HepG2 (cell line): ENCODE measurements at regions of chr19 and their contacts with region 1.

Region 1: GRCh38 chr19:36528194-36528920 is at the start of gene ZNF260:
- DNase-seq: peak; percentile 95
- ATAC-seq: peak; percentile 96
- H3K4me3 ChIP-seq: peak within 1 kb of the TSS; percentile 73 to 93 (median 85)
- H3K27ac ChIP-seq: peak within 1 kb of the TSS; percentile 86
- H3K4me1 ChIP-seq: peaks cover 18% of the 10 kb centered on the region
- H3K27me3 ChIP-seq: no peaks in the 10 kb centered on the region; a peak in 1 of 5 replicates
- CTCF ChIP-seq: 0 out of 2 replicates have a peak, but pooled peaks have one; percentile 3
- EP300 ChIP-seq: no peak
- POLR2A ChIP-seq: peak; percentile 77 to 90
- RAD21 ChIP-seq: peak; percentile 25; the same call in 1 of the 2 replicates
- total RNA-seq, gene ZNF260: 10.5 and 19.9 TPM in 2 replicates

Region 2: DNA sequence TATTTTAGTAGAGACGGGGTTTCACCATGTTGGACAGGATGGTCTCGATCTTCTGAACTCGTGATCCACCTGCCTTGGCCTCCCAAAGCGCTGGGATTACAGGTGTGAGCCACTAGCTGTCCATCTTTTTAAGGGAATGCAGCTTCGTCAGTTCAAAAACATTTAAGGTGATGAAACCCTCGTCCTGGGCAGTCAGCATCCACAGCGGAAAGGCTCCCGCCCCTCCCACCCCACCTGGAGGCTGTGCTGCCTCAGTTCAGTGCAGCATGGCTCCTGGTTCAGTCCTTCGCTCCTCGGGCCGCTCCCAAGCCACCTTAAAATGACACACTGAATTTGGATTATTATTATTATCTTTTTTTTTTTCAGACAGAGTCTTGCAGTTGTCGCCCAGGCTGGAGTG is 29.5 kb before region 1 on chr19:
- CTCF ChIA-PET with region 1: no interaction called
- POLR2A ChIA-PET with region 1: no interaction called
- in situ Hi-C with region 1: no loop called
- intact Hi-C with region 1: no loop called
- DNase-seq: no peak
- ATAC-seq: no peak
- H3K4me3 ChIP-seq: no peak overlapping the region
- H3K27ac ChIP-seq: no peak overlapping the region
- H3K4me1 ChIP-seq: no peaks in the 10 kb centered on the region
- H3K27me3 ChIP-seq: no peaks in the 10 kb centered on the region
- CTCF ChIP-seq: no peak
- EP300 ChIP-seq: no peak
- POLR2A ChIP-seq: no peak
- RAD21 ChIP-seq: no peak

Region 3: GRCh38 chr19:36605101-36605876 is 76.9 kb after region 1 on chr19 and contains the start of gene ZNF382:
- CTCF ChIA-PET with region 1: no interaction called
- POLR2A ChIA-PET with region 1: interaction called, 11 read pairs
- in situ Hi-C with region 1: no loop called
- intact Hi-C with region 1: no loop called
- DNase-seq: peak; percentile 63
- ATAC-seq: peak; percentile 94
- H3K4me3 ChIP-seq: peak within 1 kb of the TSS; percentile 87 to 94 (median 93)
- H3K27ac ChIP-seq: peak within 1 kb of the TSS; percentile 68
- H3K4me1 ChIP-seq: peaks cover 18% of the 10 kb centered on the region
- H3K27me3 ChIP-seq: no peaks in the 10 kb centered on the region; a peak in 1 of 5 replicates
- CTCF ChIP-seq: no peak
- EP300 ChIP-seq: no peak
- POLR2A ChIP-seq: peak; percentile 60 to 90
- RAD21 ChIP-seq: 0 out of 2 replicates have a peak, but pooled peaks have one; percentile 13
- total RNA-seq, gene ZNF382: 6.3 and 6.8 TPM in 2 replicates